CD4-positive, alpha-beta memory T cell (primary cell): ENCODE measurements at regions of chr7 and their contacts with region 1.

Region 1: DNA sequence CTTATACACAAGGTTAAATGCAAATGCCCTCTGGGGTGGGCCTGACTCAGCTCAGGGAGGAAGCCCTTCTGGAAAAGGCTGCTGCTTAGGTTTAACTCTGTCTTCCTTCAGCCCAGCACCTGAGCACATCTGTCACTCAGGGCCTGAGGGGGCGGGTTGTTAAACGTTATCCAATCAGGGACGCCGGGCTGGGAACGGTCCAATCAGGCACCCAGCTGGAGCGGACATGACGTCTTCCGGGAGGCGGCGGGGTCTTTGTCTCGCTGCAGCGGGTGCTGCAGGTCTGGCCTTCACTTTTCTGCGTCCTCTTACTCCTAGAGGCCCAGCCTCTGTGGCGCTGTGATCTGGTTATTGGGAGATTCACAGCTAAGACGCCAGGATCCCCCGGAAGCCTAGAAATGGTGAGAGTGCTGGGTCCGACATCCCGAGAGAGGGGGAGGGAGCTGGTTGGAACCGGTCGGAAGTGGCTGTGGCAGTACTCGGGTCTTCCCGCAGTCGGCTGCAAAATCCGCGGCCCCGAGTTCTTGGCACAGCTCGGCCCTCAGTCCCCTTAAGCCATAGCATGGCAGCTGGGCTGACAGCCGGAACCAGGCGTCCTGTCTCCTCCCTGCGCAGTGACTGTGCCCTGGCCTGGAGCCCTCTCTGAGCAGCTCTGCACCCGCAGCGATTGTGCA is at the start of gene ZNF138:
- DNase-seq: peak; percentile 92 to 95 (median 93)
- H3K4me3 ChIP-seq: peak within 1 kb of the TSS; percentile 87 to 95
- H3K4me3 Mint-ChIP-seq: peak within 1 kb of the TSS; percentile 97 to 99 (median 99)
- H3K27ac ChIP-seq: peak within 1 kb of the TSS; percentile 75
- H3K27ac Mint-ChIP-seq: peak within 1 kb of the TSS; percentile 97 to 99 (median 98)
- H3K4me1 ChIP-seq: peaks cover 27% of the 10 kb centered on the region
- H3K4me1 Mint-ChIP-seq: peaks cover 18 to 47% (median 30%) of the 10 kb centered on the region in 4 donors
- H3K27me3 ChIP-seq: no peaks in the 10 kb centered on the region
- H3K27me3 Mint-ChIP-seq: no peaks in the 10 kb centered on the region
- total RNA-seq, gene ZNF138: 12.1 to 14.3 TPM

Region 2: DNA sequence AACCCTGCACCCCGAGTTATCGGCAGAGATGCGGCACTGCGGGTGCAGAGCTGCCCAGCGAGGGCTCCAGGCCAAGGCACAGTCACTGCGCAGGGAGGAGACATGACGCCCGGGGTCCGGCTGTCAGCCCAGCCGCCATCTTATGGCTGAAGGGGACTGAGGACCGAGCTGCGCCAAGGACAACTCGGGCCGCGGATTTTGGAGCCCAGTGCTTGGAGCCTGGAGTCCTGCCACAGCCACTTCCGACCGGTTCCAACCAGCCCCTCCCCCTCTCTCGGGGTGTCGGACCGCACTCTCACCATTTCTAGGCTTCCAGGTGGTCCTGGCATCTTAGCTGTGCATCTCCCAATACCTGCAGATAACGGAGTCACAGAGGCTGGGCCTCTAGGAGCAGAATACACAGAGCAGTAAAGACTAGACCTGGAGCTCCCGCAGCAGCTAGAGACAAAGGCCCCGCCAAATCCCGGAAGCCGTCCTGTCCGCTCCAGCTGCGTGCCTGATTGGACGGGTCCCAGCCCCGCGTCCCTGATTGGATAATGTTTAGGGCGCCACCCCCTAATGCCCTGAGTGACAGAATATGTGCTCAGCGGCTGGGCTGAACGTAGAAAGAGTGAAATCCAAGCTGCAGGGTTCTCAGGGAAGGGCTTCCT is 231.6 kb before region 1 on chr7 and contains the start of gene ZNF680:
- CTCF ChIA-PET with region 1: no interaction called
- POLR2A ChIA-PET with region 1: interaction called, 18 read pairs
- intact Hi-C with region 1: loop called (anchors 5 kb)
- DNase-seq: peak; percentile 89 to 93 (median 90)
- H3K4me3 ChIP-seq: peak within 1 kb of the TSS; percentile 47 to 70
- H3K4me3 Mint-ChIP-seq: peak within 1 kb of the TSS; percentile 100
- H3K27ac ChIP-seq: peak within 1 kb of the TSS; percentile 57
- H3K27ac Mint-ChIP-seq: peak within 1 kb of the TSS; percentile 97 to 99 (median 99)
- H3K4me1 ChIP-seq: peaks cover 20% of the 10 kb centered on the region
- H3K4me1 Mint-ChIP-seq: peaks cover 21 to 46% (median 36%) of the 10 kb centered on the region in 4 donors
- H3K27me3 ChIP-seq: no peaks in the 10 kb centered on the region
- H3K27me3 Mint-ChIP-seq: no peaks in the 10 kb centered on the region
- total RNA-seq, gene ZNF680: 17.7 to 19.6 TPM

Region 3: GRCh38 chr7:64902806-64903721 is 108.8 kb after region 1 on chr7 and contains the start of gene ZNF273:
- CTCF ChIA-PET with region 1: no interaction called
- POLR2A ChIA-PET with region 1: interaction called, 12 read pairs
- intact Hi-C with region 1: loop called (anchors 1 kb)
- DNase-seq: peak; percentile 89 to 95 (median 90)
- H3K4me3 ChIP-seq: peak within 1 kb of the TSS; percentile 67 to 71
- H3K4me3 Mint-ChIP-seq: peak within 1 kb of the TSS; percentile 96 to 98 (median 98)
- H3K27ac ChIP-seq: peak within 1 kb of the TSS; percentile 79
- H3K27ac Mint-ChIP-seq: peak within 1 kb of the TSS; percentile 92 to 97 (median 96)
- H3K4me1 ChIP-seq: peaks cover 43% of the 10 kb centered on the region
- H3K4me1 Mint-ChIP-seq: peaks cover 32 to 53% (median 39%) of the 10 kb centered on the region in 4 donors
- H3K27me3 ChIP-seq: no peaks in the 10 kb centered on the region
- H3K27me3 Mint-ChIP-seq: no peaks in the 10 kb centered on the region
- total RNA-seq, gene ZNF273: 8.3 to 8.9 TPM